ENCODE measurements at regions of chr18 and their contacts with region 1.

Region 1: GRCh38 chr18:33744032-33744955 is 166.3 kb downstream of the ASXL3 start:
- DNase-seq: peak; percentile 14
- H3K4me3 ChIP-seq: no peak overlapping the region
- H3K27ac ChIP-seq: no peak overlapping the region
- H3K4me1 ChIP-seq: no peaks in the 10 kb centered on the region
- H3K27me3 ChIP-seq: no peaks in the 10 kb centered on the region
- CTCF ChIP-seq: no peak
- EP300 ChIP-seq: no peak
- POLR2A ChIP-seq: no peak

Region 2: GRCh38 chr18:33231474-33232317 is 512.6 kb before region 1 on chr18:
- in situ Hi-C with region 1: loop called in 1 of 4 experiments (anchors 25 kb)
- intact Hi-C with region 1: no loop called
- DNase-seq: peak; percentile 71
- H3K4me3 ChIP-seq: no peak overlapping the region
- H3K27ac ChIP-seq: no peak overlapping the region
- H3K4me1 ChIP-seq: peaks cover 0 to 4% (median 0%) of the 10 kb centered on the region in 4 donors
- H3K27me3 ChIP-seq: no peaks in the 10 kb centered on the region
- CTCF ChIP-seq: peak; percentile 66 to 90 (median 79)
- EP300 ChIP-seq: no peak
- POLR2A ChIP-seq: no peak